Right ventricle myocardium superior (tissue), 1 donor: ENCODE measurements at regions of chr6 and their contacts with region 1.

Region 1: DNA sequence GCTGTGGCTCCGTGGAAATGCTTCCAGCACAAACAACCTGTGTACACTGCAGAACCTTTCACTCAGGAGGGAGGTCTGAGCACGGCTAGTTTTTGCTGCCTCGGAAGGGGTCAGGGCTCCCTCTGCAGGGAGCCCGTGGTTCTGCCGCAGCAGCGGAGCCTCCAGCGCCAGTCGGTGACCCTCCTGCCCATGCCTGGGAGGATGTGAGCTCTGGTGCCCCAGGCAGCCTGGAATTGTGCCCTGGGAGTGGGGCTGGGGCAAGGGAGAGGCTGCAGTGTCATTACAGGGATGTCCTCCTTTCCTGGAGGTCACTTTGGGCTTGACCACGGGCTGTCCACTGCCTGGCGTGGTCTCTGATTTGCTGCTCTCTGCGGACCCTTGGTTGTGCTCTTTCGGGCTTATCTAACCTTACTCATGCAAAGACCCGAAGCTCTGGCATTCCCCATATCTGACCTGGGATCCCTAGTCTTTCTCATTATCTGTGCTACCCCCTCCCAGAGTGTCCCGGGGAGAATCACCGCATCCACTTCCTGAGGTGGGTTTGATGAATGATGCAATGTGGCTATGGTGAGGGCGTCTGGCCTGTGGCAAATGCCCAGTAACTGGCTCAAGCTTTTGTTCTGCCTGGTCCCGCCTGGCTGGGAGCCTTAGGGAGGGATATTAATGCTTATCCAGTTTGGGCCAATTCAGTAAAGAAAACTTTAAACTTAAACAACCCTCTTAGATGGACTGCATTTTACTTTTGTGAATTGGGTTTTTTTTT is 59.6 kb upstream of the TAGAP start:
- DNase-seq: peak; percentile 77
- ATAC-seq: peak; percentile 92

Region 2: GRCh38 chr6:158649289-158650143 is 454.8 kb before region 1 on chr6 and contains the start of gene SYTL3:
- intact Hi-C with region 1: no loop called
- DNase-seq: peak; percentile 70
- ATAC-seq: no peak
- total RNA-seq, gene SYTL3: 11.7 TPM

Region 3: DNA sequence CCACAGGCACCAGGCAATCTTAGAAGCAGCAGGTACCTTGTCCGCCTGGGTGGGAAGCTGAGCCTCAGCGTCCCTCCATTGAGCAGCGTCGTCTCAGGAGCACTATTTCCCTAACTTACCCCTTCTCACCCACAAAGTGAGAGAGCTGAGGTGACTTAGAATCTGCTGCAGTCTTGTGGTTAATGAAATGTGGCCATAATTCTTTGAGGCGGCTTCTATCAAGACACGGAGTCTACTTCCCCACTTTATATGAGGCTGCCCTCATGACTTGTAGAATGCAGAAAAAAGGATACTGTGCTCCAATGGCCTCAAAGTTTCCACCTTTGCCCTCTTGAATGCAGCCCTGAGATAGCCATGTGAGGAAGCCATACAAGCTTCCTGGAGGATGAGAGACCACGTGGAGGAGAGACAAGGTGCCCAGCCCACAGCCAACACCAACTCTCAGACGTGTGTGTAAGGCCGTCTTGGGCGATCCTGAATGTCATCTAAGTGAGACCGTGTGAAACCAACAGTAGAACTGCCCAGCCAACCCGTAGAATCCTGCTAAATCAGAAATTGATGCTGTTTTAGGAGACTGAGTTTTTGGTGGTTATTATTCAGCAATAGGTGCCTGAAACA is 50.5 kb before region 1 on chr6:
- intact Hi-C with region 1: loop called (anchors 5 kb)
- DNase-seq: no peak
- ATAC-seq: no peak

Region 4: GRCh38 chr6:159572439-159573110 is 468.2 kb after region 1 on chr6:
- intact Hi-C with region 1: no loop called
- DNase-seq: no peak
- ATAC-seq: peak; percentile 15